Vagina (tissue), 2 donors: ENCODE measurements at regions of chr1 and their contacts with region 1.

Region 1: DNA sequence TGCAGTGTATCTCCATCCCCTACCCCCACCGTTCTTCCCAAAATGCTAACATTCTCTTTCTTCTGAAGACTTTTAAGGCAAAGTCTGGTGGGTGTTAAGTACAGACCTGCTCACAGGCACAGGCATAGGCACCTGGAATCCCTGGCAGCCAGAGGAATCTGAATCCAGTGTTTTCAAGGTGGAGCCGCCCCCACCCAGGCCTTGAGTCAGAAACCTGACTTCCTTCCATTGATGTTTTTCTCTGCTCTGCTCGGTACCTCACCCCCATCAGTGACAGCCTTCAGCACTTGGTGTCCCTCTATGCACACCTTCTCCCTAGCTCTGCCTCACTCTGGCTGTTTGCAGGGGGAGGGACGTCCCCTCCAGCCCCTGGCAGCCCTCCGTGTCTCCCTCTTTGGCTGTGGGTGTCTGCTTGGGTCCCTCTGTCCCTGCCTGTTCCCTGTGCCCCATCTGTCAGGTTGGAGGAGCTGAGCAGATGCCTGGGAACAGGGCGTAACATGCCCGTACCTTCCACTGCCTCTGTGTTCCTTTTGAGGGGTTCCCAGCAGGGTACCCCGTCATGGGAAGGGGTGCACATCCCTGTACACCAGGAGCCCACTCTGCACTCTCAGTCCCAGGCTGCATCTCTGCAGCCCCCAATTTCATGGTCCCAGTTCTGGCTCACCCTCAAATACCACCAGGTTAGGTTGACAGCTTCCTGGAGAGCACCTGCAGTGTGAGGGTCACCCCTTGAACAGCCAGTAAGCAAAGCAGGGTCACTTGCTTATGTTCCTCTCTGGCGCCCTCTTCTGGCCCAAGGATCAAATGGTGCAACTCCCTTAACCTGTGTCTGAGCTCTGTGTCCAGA is 6.7 kb downstream of the NCDN start:
- DNase-seq: no peak
- H3K4me3 ChIP-seq: no peak overlapping the region
- H3K27ac ChIP-seq: no peak overlapping the region
- H3K4me1 ChIP-seq: peaks cover 26% of the 10 kb centered on the region
- H3K27me3 ChIP-seq: no peaks in the 10 kb centered on the region
- CTCF ChIP-seq: peak; percentile 59 to 78 (median 59)
- POLR2A ChIP-seq: no peak

Region 2: DNA sequence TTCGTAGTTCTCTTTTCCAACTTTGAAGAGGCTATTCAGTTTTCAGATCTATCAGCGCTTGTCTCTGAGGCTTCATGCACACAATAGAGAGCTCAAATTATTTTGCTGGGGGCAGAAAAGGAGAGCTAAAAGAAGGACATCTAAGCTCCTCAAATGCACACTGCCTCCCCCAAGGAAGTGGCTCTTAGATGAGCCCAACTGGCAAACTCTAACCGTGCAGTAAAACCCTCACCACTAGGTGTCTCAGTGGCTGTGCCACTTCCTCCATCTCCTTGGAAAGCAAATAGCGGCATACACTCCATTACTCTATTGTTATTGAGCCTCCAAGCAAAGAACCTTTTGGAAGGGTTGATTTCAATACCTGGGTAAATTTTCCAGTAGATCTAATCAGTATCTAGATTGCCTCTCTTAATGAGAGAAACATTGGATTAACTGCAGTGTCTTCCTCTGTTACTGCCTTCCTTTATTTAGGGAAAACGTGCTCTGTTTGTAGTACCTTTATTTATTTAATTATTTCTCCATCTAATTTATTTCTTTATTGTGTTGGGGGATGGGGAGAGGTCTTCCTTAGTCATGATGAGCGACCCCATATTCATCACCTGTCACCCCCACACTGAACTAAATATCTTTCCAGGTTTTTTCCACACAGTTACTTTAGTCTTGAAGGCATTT is 362.1 kb before region 1 on chr1:
- intact Hi-C with region 1: loop called (anchors 10 kb)
- DNase-seq: no peak
- H3K4me3 ChIP-seq: no peak overlapping the region
- H3K27ac ChIP-seq: no peak overlapping the region
- H3K4me1 ChIP-seq: no peaks in the 10 kb centered on the region
- H3K27me3 ChIP-seq: no peaks in the 10 kb centered on the region
- CTCF ChIP-seq: peak; percentile 56 to 73 (median 63)
- POLR2A ChIP-seq: no peak

Region 3: DNA sequence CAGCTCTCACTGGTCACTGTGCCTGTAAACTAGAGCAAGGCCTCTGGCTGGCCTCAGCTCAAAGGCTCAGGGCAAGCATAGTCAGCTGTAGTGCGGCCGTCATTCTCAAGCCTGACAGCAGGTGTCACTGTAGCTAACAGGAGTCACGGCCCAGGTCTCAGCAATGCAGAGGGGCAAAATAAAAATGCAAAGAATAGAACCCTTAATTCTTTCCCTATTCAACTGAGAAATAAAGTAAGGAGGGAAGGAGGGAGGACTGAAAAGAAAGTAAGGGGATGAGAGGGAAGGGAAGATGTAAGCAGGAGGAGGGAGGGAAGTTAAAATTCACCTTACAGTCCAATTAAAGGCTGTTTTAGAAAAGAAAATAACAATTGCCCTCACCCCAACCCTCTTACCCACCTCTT is 113.1 kb before region 1 on chr1:
- intact Hi-C with region 1: loop called (anchors 5 kb)
- DNase-seq: no peak
- H3K4me3 ChIP-seq: no peak overlapping the region
- H3K27ac ChIP-seq: peak overlapping the region; percentile 76
- H3K4me1 ChIP-seq: peaks cover 48% of the 10 kb centered on the region
- H3K27me3 ChIP-seq: no peaks in the 10 kb centered on the region
- CTCF ChIP-seq: peak; percentile 76 to 91 (median 90)
- POLR2A ChIP-seq: no peak

Region 4: DNA sequence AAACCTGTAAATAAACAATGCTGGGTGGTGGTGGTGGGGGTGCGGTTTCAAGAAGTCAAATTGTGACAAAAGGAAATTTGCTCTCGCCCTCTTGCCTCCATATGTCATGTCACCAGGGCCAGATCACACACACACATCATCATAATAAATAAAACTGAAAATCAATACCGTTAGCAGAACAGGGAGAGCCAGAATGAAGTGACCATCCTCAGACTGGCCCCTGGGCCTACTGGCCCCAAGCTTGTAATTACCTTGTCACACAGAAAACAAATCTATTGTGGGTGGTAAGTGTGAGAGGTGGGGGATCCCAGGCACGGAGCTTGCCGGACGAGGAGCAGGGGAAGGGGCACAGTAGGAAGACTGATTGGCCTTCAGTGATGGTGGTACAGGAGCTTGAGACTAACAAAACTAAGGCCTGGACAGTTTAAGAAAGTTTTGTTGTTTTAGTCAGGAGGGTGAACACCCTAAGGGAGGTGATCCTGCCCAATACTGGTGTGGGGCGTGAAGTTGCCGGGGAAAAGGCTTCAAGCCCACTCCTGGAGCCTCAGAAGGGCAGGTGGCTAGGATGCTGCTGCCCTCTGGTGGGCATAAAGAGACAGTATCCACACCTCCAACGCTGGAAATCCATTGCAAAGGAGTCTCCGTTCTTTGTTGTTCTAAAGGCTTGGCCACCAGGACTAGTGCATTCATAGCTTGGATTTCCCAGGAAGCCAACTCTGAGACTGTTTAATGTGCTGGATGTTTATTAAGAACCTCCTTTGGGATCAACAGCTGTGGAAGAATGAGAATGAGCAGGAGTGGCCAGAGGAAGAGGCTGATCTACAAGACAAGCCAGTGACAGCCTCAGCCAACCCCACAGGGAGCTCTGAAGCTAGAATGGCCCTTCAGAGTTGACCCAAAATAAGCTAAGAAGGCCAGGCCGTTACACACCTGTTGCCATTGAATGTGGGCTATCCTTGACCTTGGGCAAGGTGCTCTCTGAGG is 162.5 kb after region 1 on chr1:
- intact Hi-C with region 1: loop called (anchors 5 kb)
- DNase-seq: no peak
- H3K4me3 ChIP-seq: no peak overlapping the region
- H3K27ac ChIP-seq: no peak overlapping the region
- H3K4me1 ChIP-seq: no peaks in the 10 kb centered on the region
- H3K27me3 ChIP-seq: no peaks in the 10 kb centered on the region
- CTCF ChIP-seq: peak; percentile 71 to 77 (median 76)
- POLR2A ChIP-seq: no peak